Gastrocnemius medialis (tissue), 4 donors: ENCODE measurements at regions of chr5 and their contacts with region 1.

Region 1: GRCh38 chr5:174418928-174419796 is 305.2 kb upstream of the MSX2 start:
- DNase-seq: peak; percentile 67 to 76
- ATAC-seq: peak; percentile 62 to 72
- H3K4me3 ChIP-seq: no peak overlapping the region
- H3K27ac ChIP-seq: no peak overlapping the region
- H3K4me1 ChIP-seq: peaks cover 7 to 15% of the 10 kb centered on the region in 2 donors
- H3K27me3 ChIP-seq: peaks cover 0 to 5% (median 0%) of the 10 kb centered on the region in 3 donors
- CTCF ChIP-seq: peak; percentile 71 to 88 (median 80)
- POLR2A ChIP-seq: no peak

Region 2: DNA sequence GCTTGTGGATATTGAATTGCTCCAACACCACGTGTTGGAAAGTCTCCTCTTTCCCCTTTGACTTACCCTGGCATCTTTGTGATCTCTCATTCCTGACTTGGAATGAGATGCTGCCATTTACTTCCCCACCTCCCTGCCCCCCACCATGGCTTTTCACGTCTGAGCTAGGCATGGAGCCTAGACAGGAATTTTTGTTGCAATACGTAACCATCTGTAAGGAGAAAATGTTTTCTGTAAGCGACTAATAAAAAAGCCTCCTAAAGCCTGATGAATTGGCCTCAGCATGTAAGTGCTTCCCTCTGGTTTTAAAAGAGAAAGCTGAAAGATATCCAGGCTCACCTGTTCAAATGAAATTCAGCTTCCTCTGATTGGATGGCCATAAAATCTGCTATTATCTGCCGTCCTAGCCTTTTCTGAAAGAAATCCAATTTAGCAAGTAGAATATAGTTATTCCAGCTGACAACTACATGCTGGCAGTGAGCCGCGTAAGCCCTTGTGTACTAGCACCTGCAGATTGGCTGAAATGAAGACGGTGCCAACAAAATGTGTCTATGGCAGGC is 173.6 kb before region 1 on chr5:
- in situ Hi-C with region 1: no loop called
- intact Hi-C with region 1: no loop called
- DNase-seq: no peak
- ATAC-seq: no peak
- H3K4me3 ChIP-seq: no peak overlapping the region
- H3K27ac ChIP-seq: no peak overlapping the region
- H3K4me1 ChIP-seq: no peaks in the 10 kb centered on the region
- H3K27me3 ChIP-seq: no peaks in the 10 kb centered on the region
- CTCF ChIP-seq: no peak
- POLR2A ChIP-seq: no peak

Region 3: GRCh38 chr5:174735498-174736330 is 316.6 kb after region 1 on chr5:
- in situ Hi-C with region 1: loop called in 2 of 4 experiments (anchors 10 kb)
- intact Hi-C with region 1: loop called (anchors 1 kb)
- DNase-seq: no peak
- ATAC-seq: peak in 1 of 2 donors; percentile 56
- H3K4me3 ChIP-seq: peak overlapping the region in 1 of 4 donors; percentile 5
- H3K27ac ChIP-seq: no peak overlapping the region
- H3K4me1 ChIP-seq: peaks cover 0 to 3% of the 10 kb centered on the region in 2 donors
- H3K27me3 ChIP-seq: peaks cover 47 to 60% (median 60%) of the 10 kb centered on the region in 3 donors
- CTCF ChIP-seq: peak in 3 of 5 experiments; percentile 32 to 49 (median 36)
- POLR2A ChIP-seq: no peak

Region 4: GRCh38 chr5:174785120-174785680 is 366.0 kb after region 1 on chr5:
- in situ Hi-C with region 1: loop called in 2 of 4 experiments (anchors 10 kb)
- intact Hi-C with region 1: no loop called
- DNase-seq: no peak
- ATAC-seq: no peak
- H3K4me3 ChIP-seq: no peak overlapping the region
- H3K27ac ChIP-seq: no peak overlapping the region
- H3K4me1 ChIP-seq: no peaks in the 10 kb centered on the region
- H3K27me3 ChIP-seq: no peaks in the 10 kb centered on the region
- CTCF ChIP-seq: no peak
- POLR2A ChIP-seq: no peak

Region 5: GRCh38 chr5:174793684-174794328 is 374.6 kb after region 1 on chr5:
- in situ Hi-C with region 1: loop called (anchors 5 to 10 kb)
- intact Hi-C with region 1: loop called (anchors 1 kb)
- DNase-seq: peak; percentile 2 to 15
- ATAC-seq: peak; percentile 26 to 64
- H3K4me3 ChIP-seq: peak overlapping the region in 1 of 4 donors; percentile 11
- H3K27ac ChIP-seq: no peak overlapping the region
- H3K4me1 ChIP-seq: peaks cover 0 to 4% of the 10 kb centered on the region in 2 donors
- H3K27me3 ChIP-seq: peaks cover 8 to 27% (median 15%) of the 10 kb centered on the region in 3 donors
- CTCF ChIP-seq: peak; percentile 47 to 77 (median 68)
- POLR2A ChIP-seq: no peak

Region 6: DNA sequence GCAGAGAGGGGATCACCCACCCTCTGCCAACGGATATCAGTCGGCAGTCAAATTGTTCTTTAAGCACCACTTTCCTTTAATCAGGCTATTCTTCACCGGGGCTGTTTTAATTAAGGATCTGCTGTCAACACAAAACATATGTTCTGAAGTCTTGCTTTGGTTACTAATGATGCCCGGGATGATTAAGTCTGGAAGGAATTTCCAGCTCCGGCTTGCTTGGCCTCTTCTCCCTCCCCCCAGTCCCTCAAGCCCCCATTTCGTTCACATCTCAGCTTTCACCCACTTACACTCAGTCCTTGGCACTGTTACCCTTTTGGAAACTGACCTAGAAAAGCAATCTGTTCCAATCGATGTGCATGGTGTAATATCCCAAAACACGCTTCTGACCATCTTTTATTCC is 380.0 kb after region 1 on chr5:
- in situ Hi-C with region 1: loop called in 3 of 4 experiments (anchors 5 to 10 kb)
- intact Hi-C with region 1: no loop called
- DNase-seq: no peak
- ATAC-seq: no peak
- H3K4me3 ChIP-seq: no peak overlapping the region
- H3K27ac ChIP-seq: no peak overlapping the region
- H3K4me1 ChIP-seq: no peaks in the 10 kb centered on the region
- H3K27me3 ChIP-seq: peaks cover 8 to 23% (median 15%) of the 10 kb centered on the region in 3 donors
- CTCF ChIP-seq: no peak
- POLR2A ChIP-seq: no peak

Region 7: GRCh38 chr5:174935854-174936474 is 516.8 kb after region 1 on chr5:
- in situ Hi-C with region 1: loop called (anchors 5 to 25 kb)
- intact Hi-C with region 1: loop called (anchors 1 kb)
- DNase-seq: peak; percentile 8 to 24
- ATAC-seq: peak in 1 of 2 donors; percentile 55
- H3K4me3 ChIP-seq: no peak overlapping the region
- H3K27ac ChIP-seq: no peak overlapping the region
- H3K4me1 ChIP-seq: no peaks in the 10 kb centered on the region
- H3K27me3 ChIP-seq: no peaks in the 10 kb centered on the region
- CTCF ChIP-seq: peak; percentile 42 to 79 (median 66)
- POLR2A ChIP-seq: no peak